Activated T-helper 2 cell treated with anti-CD3 and anti-CD28 coated beads, Interferon-gamma antibody, Interleukin-2, Interleukin-4, amounts not matched to agents 10 μg/mL and 5 μg/mL and 100 μg/mL, durations not matched to agents 14 hours and 24 hours and 36 hours (primary cell): ENCODE measurements at regions of chr12 and their contacts with region 1.

Region 1: GRCh38 chr12:98743347-98743953 is 98.4 kb downstream of the APAF1 start:
- DNase-seq: peak; percentile 31
- H3K4me3 Mint-ChIP-seq: peak overlapping the region; percentile 18
- H3K27ac Mint-ChIP-seq: peak overlapping the region; percentile 28
- H3K4me1 Mint-ChIP-seq: peaks cover 58% of the 10 kb centered on the region
- H3K27me3 Mint-ChIP-seq: peaks cover 7% of the 10 kb centered on the region

Region 2: GRCh38 chr12:98503592-98504367 is 239.7 kb before region 1 on chr12:
- intact Hi-C with region 1: loop called (anchors 5 kb)
- DNase-seq: peak; percentile 89
- H3K4me3 Mint-ChIP-seq: peak overlapping the region; percentile 96
- H3K27ac Mint-ChIP-seq: peak overlapping the region; percentile 99
- H3K4me1 Mint-ChIP-seq: peaks cover 33% of the 10 kb centered on the region
- H3K27me3 Mint-ChIP-seq: peaks cover 4% of the 10 kb centered on the region

Region 3: GRCh38 chr12:98644711-98645402 is 98.6 kb before region 1 on chr12 and contains the starts of genes APAF1 and IKBIP:
- intact Hi-C with region 1: loop called (anchors 2 kb)
- DNase-seq: peak; percentile 94
- H3K4me3 Mint-ChIP-seq: peak within 1 kb of the TSS; percentile 97
- H3K27ac Mint-ChIP-seq: peak within 1 kb of the TSS; percentile 98
- H3K4me1 Mint-ChIP-seq: peaks cover 32% of the 10 kb centered on the region
- H3K27me3 Mint-ChIP-seq: no peaks in the 10 kb centered on the region
- total RNA-seq, gene APAF1: 28.3 and 31.2 TPM in 2 replicates
- total RNA-seq, gene IKBIP: 39.9 and 41.1 TPM in 2 replicates

Region 4: DNA sequence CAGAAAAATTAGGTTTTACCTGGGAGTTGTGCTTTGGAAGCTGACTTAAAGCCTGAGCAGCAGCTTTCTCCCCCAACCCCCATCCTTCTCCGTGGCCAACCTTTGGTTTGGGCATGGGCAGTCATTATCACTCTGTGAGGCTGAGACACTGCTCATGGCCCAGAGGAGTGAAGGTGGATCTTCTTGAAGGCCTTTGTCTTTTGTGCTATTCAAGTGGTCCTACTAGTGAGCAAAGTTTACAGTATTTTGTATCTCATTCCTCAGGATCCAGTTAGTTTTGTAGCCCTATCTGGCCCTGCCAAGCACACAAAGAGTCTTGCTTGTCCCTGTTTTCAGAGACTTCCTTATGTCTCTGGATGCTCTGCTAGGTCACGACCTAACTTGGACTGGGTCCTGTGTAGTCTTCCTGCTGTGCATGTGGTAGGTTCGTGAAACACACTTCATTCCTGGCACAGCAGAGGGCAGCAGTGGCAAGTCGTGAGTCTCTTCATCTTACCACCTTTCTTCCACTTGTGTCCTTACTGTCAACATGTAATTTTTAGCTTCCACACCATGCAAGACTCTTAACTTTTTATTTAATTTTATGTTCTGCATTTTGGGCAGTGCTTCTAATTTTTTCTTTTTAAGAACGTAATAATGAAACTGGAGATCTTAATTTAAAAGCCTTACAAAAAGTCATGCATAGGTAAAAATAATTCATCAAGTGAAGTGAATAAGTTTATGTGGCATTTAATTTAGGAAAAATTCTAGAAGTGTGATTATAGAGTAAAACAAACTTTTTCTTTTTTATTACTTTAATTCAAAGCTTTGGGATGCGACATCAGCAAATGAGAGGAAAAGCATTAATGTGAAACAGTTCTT is 44.6 kb before region 1 on chr12:
- intact Hi-C with region 1: loop called (anchors 2 kb)
- DNase-seq: no peak
- H3K4me3 Mint-ChIP-seq: no peak overlapping the region
- H3K27ac Mint-ChIP-seq: no peak overlapping the region
- H3K4me1 Mint-ChIP-seq: peaks cover 13% of the 10 kb centered on the region
- H3K27me3 Mint-ChIP-seq: no peaks in the 10 kb centered on the region

Region 5: DNA sequence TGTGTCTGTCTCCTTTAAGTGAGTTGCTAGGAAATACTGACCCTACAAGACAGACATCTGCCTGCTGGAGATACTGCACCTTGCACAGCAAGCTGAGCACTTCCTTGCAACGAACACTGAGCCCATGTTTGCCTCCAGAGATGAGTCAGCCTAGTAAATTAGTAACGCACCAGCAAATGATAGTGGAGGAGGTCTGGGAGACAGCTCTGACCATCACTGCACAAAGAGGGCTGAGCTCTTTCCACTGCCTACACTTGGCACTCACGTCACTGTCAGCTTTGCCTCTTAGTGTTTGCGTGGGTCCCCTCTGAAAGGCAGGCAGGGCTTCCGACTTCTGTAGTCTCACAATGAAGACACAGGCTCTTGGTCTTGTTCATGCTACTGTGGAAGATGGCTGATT is 10.6 kb after region 1 on chr12:
- intact Hi-C with region 1: loop called (anchors 1 kb)
- DNase-seq: peak; percentile 24
- H3K4me3 Mint-ChIP-seq: no peak overlapping the region
- H3K27ac Mint-ChIP-seq: peak overlapping the region; percentile 59
- H3K4me1 Mint-ChIP-seq: peaks cover 25% of the 10 kb centered on the region
- H3K27me3 Mint-ChIP-seq: no peaks in the 10 kb centered on the region

Region 6: GRCh38 chr12:98793121-98793520 is 49.7 kb after region 1 on chr12:
- intact Hi-C with region 1: no loop called
- DNase-seq: no peak
- H3K4me3 Mint-ChIP-seq: no peak overlapping the region
- H3K27ac Mint-ChIP-seq: no peak overlapping the region
- H3K4me1 Mint-ChIP-seq: no peaks in the 10 kb centered on the region
- H3K27me3 Mint-ChIP-seq: peaks cover 30% of the 10 kb centered on the region

Region 7: DNA sequence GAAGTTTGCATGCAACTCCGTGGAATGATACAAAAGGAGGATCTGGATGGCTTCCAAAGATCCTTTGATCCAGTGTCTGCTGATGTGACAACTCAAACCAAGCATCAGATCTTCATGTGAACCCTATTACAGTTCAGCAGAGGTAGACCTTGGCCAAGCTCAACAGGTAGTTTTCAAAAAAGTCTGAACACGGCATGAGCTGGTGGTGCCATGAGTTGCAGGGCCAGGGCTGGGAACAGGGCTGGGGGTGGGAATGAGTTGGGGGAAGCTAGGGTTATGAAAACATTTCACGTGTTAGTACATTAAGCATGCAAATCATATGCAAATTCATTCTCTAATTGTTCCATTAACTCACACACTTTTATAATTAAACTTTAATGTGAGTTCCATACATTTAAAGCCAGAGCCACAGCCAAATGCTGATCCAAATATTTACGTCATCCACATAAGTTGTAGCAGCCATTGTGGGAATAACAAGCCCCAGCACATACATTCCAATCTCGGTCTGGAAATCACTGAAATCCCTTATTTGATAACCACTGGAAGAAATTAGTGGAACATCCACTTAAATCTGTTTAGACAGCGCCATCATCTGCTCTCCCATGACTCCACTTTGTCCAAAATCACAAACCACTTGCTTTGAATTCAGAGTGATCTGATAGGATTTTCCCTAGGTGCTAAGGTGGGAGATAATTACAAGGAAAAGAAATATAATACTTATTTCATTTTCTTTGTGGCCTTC is 60.2 kb after region 1 on chr12:
- intact Hi-C with region 1: no loop called
- DNase-seq: no peak
- H3K4me3 Mint-ChIP-seq: no peak overlapping the region
- H3K27ac Mint-ChIP-seq: no peak overlapping the region
- H3K4me1 Mint-ChIP-seq: no peaks in the 10 kb centered on the region
- H3K27me3 Mint-ChIP-seq: peaks cover 30% of the 10 kb centered on the region